ENCODE measurements at regions of chr17 and their contacts with region 1.

Region 1: GRCh38 chr17:39485555-39485954 is 24.3 kb downstream of the CDK12 start:
- DNase-seq: no peak
- ATAC-seq: no peak
- H3K4me3 ChIP-seq: no peak overlapping the region
- H3K4me3 Mint-ChIP-seq: no peak overlapping the region
- H3K27ac ChIP-seq: no peak overlapping the region
- H3K27ac Mint-ChIP-seq: no peak overlapping the region
- H3K4me1 ChIP-seq: no peaks in the 10 kb centered on the region
- H3K4me1 Mint-ChIP-seq: peaks cover 2 to 20% (median 13%) of the 10 kb centered on the region in 7 donors
- H3K27me3 ChIP-seq: no peaks in the 10 kb centered on the region
- H3K27me3 Mint-ChIP-seq: no peaks in the 10 kb centered on the region

Region 2: GRCh38 chr17:39443326-39443725 is 42.2 kb before region 1 on chr17:
- CTCF ChIA-PET with region 1: no interaction called
- POLR2A ChIA-PET with region 1: no interaction called
- intact Hi-C with region 1: loop called in 1 of 2 experiments (anchors 5 kb)
- DNase-seq: no peak
- ATAC-seq: no peak
- H3K4me3 ChIP-seq: no peak overlapping the region
- H3K4me3 Mint-ChIP-seq: no peak overlapping the region
- H3K27ac ChIP-seq: no peak overlapping the region
- H3K27ac Mint-ChIP-seq: no peak overlapping the region
- H3K4me1 ChIP-seq: no peaks in the 10 kb centered on the region
- H3K4me1 Mint-ChIP-seq: peaks cover 1 to 22% (median 17%) of the 10 kb centered on the region in 7 donors
- H3K27me3 ChIP-seq: no peaks in the 10 kb centered on the region
- H3K27me3 Mint-ChIP-seq: no peaks in the 10 kb centered on the region